ENCODE measurements at regions of chr5 and their contacts with region 1.

Region 1: DNA sequence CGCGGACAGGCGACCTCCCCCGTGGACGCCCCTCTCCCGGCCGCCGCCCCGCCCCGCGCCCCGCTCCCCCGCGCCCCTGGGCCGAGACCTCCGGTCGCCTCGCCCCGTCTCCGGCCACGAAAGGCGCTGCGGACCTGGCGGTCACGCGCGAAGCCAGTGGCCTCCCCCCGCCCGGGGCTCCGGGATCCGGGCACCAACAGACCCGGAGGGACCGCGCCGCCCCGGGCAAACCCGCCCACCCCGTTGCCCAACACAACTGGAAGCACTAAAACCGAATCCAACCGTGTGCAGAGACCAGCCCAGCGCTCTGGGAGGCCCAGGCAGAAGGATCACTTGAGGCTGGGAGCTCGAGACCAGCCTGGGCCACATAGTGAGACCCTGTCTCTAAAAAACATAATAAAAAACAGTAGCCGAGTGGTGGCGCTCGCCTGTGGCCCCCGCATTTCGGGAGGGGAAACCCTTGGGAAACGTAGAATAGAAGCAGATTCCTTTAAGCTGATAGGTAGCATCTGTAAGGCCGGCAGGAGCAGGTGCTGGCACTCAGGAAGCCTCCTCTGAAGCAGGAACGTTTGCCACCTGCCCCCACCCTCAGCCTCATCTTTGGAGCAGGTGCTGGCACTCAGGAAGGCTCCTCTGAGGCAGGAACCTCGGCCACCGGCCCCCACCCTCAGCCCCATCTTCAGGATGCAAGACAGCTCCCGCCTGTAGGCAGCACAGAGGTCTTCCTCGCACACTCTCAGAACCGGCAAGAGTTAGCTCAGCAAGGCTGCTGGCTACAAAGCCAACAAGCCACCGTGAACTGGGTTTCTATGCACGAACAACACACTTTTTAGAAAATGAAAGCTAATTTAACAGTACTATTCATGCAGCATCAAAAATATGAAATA is 4.6 kb upstream of the SLC9A3 start:
- H3K4me3 Mint-ChIP-seq: no peak overlapping the region
- H3K27ac Mint-ChIP-seq: no peak overlapping the region
- H3K4me1 Mint-ChIP-seq: peaks cover 43% of the 10 kb centered on the region
- H3K27me3 Mint-ChIP-seq: peaks cover 72% of the 10 kb centered on the region

Region 2: GRCh38 chr5:472656-473553 is 56.0 kb before region 1 on chr5:
- intact Hi-C with region 1: loop called (anchors 5 kb)
- H3K4me3 Mint-ChIP-seq: peak overlapping the region; percentile 78
- H3K27ac Mint-ChIP-seq: peak overlapping the region; percentile 41
- H3K4me1 Mint-ChIP-seq: peaks cover 49% of the 10 kb centered on the region
- H3K27me3 Mint-ChIP-seq: peaks cover 46% of the 10 kb centered on the region